ENCODE measurements at regions of chr16 and their contacts with region 1.

Region 1: DNA sequence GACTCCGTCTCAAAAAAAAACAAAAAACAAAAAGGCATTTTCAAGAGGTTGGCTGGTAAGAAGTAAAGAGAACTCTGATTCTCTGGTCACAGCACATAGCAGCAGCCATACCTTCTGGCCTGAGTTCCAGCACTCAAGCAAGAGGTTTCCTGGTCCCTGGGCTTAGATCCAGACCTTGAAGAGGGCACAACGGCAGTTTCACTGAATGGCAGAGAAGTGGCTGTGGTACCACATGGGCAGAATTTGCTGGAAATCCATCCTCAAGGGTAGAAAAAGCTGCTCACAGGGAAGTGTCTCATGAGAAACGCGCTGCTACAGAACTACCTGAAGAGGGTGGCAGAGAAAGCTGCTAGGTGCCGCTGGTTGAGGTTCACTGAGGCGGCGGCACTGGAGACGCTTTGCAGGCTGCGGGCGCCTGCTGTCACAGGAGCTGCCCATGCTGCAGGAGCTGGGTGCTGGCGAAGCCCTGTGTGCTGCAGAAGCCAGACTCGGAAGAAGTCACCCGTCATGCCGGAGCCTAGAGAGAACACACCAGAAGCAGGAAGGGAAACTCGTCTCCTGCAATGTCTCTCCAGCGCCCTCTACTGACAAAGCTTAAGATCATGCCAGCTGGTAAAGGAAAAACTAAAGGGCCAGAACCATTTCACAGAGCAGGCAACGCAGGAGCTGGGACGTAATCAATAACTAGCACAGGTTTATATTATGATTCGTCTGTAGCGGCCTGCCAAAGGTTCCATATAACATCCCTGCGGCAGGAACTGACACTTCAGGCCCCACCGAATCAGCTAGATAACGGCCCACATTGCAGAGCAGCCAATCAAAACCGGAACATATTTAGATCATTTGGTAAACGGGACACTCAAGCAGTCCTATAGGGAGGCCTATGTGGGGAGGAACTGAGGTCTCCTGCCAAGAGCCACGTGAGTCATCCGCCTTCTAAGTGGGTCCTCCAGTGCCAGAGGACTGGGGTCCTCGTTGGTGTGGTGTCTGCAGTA is 5.4 kb upstream of the ZNF213 start:
- DNase-seq: peak; percentile 89
- H3K4me3 Mint-ChIP-seq: peak overlapping the region; percentile 89
- H3K27ac Mint-ChIP-seq: peak overlapping the region; percentile 90
- H3K4me1 Mint-ChIP-seq: peaks cover 71% of the 10 kb centered on the region
- H3K27me3 Mint-ChIP-seq: no peaks in the 10 kb centered on the region

Region 2: GRCh38 chr16:3045357-3045728 is 84.1 kb before region 1 on chr16:
- CTCF ChIA-PET with region 1: interaction called, 22 read pairs
- DNase-seq: peak; percentile 72
- H3K4me3 Mint-ChIP-seq: peak overlapping the region; percentile 83
- H3K27ac Mint-ChIP-seq: peak overlapping the region; percentile 82
- H3K4me1 Mint-ChIP-seq: peaks cover 51% of the 10 kb centered on the region
- H3K27me3 Mint-ChIP-seq: peaks cover 85% of the 10 kb centered on the region

Region 3: DNA sequence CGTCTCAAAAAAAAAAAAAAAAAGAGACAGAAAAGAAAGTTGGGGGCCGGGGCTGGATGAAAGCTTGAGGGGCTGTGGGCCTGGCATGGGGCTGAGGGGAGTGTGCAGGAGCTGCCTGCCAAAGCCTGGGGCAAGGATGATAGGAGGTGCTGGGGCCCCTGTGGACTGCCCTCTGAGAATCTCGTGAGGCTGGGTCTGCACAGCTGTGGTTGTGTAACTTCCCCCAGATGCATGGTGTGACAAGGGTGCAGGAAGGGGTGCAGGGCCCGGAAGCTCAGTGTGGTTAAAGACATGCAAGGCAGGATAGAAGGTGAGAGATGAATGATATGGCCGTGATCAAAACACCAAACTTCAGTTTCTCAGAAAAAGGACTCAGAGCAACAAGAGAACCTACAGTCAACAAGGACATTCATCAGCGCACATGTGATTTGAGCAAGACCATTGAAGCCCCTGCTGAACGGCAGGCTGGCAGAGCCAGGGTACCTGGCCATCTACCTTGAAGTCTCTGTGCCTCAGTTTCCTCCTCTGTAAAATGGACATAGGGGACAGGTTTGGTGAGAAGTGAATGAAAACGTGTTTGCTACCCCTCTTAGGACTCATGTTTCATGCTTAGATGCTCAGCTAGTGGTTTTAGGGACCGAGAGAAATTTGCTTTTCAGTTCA is 54.4 kb before region 1 on chr16:
- CTCF ChIA-PET with region 1: interaction called, 21 read pairs
- DNase-seq: peak; percentile 95
- H3K4me3 Mint-ChIP-seq: peak overlapping the region; percentile 74
- H3K27ac Mint-ChIP-seq: peak overlapping the region; percentile 100
- H3K4me1 Mint-ChIP-seq: peaks cover 94% of the 10 kb centered on the region
- H3K27me3 Mint-ChIP-seq: no peaks in the 10 kb centered on the region

Region 4: DNA sequence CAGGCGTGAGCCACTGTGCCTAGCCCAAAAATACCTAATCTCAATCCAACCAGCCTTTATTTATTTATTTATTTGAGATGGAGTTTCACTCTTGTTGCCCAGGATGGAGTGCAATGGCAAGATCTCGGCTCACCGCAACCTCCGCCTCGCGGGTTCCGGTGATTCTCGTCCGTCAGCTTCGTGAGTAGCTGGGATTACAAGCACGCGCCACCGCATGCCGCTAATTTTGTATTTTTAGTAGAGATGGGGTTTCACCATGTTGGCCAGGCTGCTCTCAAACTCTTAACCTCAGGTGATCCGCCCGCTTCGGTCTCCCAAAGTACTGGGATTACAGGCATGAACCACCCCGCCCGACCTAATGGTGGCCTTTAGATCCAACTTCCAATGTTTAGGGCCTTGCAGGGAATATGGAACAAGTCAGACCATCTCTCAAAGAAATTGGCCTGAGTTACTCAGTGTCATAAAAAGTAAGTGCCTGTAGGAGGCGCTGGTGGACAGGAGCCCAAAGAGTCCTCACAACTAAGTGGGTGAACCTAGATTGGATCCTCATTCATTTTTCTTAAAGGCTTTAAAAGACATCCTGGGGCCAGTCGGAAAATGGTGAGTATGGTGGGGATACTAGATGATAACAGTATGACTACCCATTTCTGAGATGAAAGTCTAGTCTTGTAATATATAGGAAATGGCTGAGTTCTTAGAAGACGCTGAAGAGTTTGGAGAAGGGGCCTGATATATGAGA is 35.0 kb before region 1 on chr16:
- CTCF ChIA-PET with region 1: interaction called, 200 read pairs
- DNase-seq: peak; percentile 70
- H3K4me3 Mint-ChIP-seq: no peak overlapping the region
- H3K27ac Mint-ChIP-seq: peak overlapping the region; percentile 1
- H3K4me1 Mint-ChIP-seq: peaks cover 67% of the 10 kb centered on the region
- H3K27me3 Mint-ChIP-seq: peaks cover 13% of the 10 kb centered on the region

Region 5: GRCh38 chr16:3150346-3151218 is 21.1 kb after region 1 on chr16:
- CTCF ChIA-PET with region 1: interaction called, 14 read pairs
- DNase-seq: peak; percentile 97
- H3K4me3 Mint-ChIP-seq: peak overlapping the region; percentile 83
- H3K27ac Mint-ChIP-seq: peak overlapping the region; percentile 93
- H3K4me1 Mint-ChIP-seq: peaks cover 35% of the 10 kb centered on the region
- H3K27me3 Mint-ChIP-seq: peaks cover 53% of the 10 kb centered on the region

Region 6: DNA sequence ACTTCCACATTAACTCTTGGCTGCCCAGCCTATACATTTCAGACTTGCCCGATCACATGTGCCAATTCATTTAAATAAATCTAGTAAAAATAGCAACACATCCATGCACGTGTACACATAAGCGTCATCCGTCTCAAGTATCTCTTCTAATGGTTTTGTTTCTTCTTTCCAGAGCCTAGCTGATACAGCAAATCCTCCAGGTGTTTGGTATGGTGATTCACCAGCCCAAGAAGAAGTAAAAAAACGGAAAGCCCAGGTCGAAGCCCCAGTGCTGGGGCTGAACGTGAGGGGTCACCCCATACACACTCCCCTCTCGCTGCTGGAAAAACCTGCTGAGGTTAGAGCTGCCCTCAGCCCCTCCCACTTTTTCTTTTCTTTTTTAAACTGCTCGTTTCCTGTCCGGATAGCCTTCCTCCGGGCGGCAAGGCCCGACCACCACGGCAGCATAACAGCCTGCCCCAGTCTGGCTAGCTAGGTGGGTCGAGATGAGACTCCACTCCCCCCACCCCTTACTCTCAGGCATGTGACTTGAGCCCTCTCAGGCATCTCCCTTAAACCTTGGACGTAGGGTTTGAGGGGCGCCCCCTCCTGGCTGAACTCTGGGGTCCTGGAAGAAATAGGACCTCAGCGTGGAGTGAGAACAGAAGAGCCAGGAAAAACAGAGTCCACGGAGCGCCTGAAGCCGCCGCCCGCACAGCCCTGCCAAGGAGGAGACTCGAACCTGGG is 44.6 kb after region 1 on chr16:
- CTCF ChIA-PET with region 1: interaction called, 12 read pairs
- DNase-seq: peak; percentile 36
- H3K4me3 Mint-ChIP-seq: peak overlapping the region; percentile 26
- H3K27ac Mint-ChIP-seq: peak overlapping the region; percentile 55
- H3K4me1 Mint-ChIP-seq: peaks cover 43% of the 10 kb centered on the region
- H3K27me3 Mint-ChIP-seq: peaks cover 99% of the 10 kb centered on the region

Region 7: DNA sequence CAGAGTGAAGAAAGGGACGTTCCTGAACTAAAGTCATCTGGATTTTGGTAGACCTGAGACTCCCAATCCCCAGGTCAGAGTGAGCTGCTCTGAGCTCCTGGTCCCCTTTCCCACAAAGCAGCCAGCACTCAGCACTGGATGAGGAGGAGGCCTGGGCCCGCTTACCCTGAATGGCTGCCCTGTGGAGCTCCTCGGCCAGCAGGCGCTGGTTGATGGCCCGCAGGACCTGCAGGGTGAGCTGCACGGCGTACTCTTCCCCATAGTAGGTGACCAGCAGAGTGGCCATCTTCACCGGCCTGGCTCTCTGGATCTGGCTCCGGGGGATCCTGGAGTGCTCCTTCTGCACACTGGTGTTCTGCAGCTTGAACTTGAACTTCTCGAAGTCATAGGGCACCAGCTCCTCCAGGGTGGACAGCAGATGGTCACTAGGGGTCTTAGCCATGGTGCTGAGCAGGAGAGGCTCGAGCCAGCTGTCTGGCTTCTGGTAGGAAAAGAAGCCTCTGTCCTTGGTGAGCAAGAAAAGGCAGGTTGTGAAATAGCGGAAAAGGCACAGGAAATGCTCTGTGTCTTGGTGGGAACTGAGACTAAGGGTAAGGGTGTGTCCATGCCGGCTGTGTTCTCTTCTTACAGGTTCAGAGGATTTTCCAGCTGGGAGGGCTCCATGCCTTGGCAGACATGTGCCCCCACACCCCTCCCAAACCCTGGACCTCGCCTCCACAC is 126.9 kb after region 1 on chr16 and contains the start of gene MEFV:
- CTCF ChIA-PET with region 1: no interaction called
- DNase-seq: no peak
- H3K4me3 Mint-ChIP-seq: no peak within 1 kb of the TSS
- H3K27ac Mint-ChIP-seq: no peak within 1 kb of the TSS
- H3K4me1 Mint-ChIP-seq: no peaks in the 10 kb centered on the region
- H3K27me3 Mint-ChIP-seq: peaks cover 25% of the 10 kb centered on the region

Region 8: DNA sequence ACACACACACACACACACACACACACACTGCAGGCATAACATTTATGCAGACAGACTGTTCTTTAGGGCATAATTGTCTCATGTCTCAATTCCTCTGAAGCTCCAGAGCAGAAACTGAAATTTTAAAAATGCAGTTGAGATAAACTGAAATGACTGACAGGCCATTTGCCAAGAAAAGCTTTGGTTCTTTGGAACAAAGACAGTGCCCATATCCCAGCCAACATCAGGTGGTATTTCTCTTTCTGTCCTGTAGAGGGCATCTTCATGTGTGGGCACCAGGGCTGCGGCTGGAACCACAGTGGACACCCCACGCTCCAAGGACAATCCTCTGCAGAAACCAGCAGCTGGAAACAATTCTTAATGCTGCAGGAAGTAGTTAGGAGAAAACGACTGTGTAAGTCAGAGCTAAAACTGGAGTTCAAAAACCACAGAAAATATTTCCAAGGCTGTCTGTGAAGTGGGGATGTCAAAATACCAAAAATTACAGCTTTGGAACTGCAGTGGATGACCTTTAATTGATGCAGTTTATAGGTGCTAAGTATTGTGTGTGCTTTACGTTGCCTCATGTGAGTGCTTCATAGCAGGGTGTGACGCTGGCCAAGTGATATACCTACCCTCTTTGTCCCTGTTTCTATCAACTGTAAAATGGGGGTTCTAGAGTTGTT is 137.6 kb after region 1 on chr16:
- CTCF ChIA-PET with region 1: no interaction called
- DNase-seq: no peak
- H3K4me3 Mint-ChIP-seq: no peak overlapping the region
- H3K27ac Mint-ChIP-seq: no peak overlapping the region
- H3K4me1 Mint-ChIP-seq: peaks cover 32% of the 10 kb centered on the region
- H3K27me3 Mint-ChIP-seq: no peaks in the 10 kb centered on the region

Region 9: DNA sequence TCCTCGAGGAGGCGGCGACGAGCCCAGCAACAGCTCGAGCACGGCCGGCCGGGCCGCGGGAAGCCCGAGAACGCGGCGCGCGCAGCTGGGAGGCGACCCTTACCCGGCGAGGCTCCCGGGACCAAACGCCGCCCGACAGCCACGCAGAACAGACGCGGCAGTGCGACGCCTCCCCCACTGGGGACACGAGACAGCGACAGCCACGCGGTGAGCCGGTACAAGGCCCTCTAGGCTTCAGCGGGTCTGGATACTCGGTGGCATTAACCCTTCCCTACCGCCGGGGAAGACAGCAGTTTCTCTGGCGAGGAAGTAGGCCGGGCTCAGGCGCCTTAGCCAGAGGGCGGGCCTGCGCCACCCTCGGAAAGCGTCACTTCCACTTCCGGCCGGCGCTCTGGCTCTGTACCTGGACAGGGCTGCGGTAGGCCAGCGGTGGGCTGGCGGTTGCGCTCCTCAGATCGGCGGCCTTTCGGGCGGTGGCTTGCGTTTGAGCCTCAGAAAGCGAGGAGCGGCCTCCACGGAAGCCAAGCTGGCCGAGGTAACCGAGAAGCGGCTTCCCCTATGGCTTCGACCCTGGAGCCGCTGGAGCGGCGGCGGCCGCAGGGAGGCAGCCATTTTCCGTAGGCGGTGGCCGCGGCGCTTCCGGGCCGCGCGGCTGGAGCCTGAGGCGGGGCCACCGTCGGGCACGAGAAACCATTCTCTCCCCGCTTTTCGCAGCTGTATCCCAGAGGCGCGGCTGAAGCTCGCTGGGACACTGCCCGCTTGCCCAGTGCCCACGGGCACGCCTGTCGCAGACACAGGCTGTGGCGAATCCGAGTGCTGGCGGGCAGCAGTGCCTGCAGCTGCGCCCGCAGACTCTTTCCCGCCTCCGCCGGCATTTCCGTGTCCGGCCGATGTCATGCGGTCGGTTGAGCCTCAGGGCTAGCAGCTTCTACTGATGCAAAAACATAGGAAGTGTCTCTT is 176.0 kb after region 1 on chr16 and contains the starts of genes TIGD7 and ZNF75A:
- CTCF ChIA-PET with region 1: no interaction called
- DNase-seq: peak; percentile 88
- H3K4me3 Mint-ChIP-seq: peak within 1 kb of the TSS; percentile 74
- H3K27ac Mint-ChIP-seq: peak within 1 kb of the TSS; percentile 91
- H3K4me1 Mint-ChIP-seq: peaks cover 18% of the 10 kb centered on the region
- H3K27me3 Mint-ChIP-seq: peaks cover 4% of the 10 kb centered on the region